HCT116 (cell line): ENCODE measurements at regions of chr5 and their contacts with region 1.

Region 1: GRCh38 chr5:57779383-57780223 is 297.0 kb upstream of the ACTBL2 start:
- DNase-seq: peak; percentile 63
- ATAC-seq: peak; percentile 94
- H3K4me3 ChIP-seq: no peak overlapping the region
- H3K27ac ChIP-seq: no peak overlapping the region
- H3K4me1 ChIP-seq: peaks cover 0 to 8% of the 10 kb centered on the region in 2 experiments; a peak in 1 of 4 replicates
- H3K27me3 ChIP-seq: no peaks in the 10 kb centered on the region
- CTCF ChIP-seq: peak; percentile 60 to 81 (median 78); a peak in 5 of 6 replicates
- POLR2A ChIP-seq: no peak
- RAD21 ChIP-seq: peak; percentile 92

Region 2: GRCh38 chr5:57494104-57495098 is 285.2 kb before region 1 on chr5:
- CTCF ChIA-PET with region 1: interaction called, 36 read pairs
- POLR2A ChIA-PET with region 1: interaction called, 4 read pairs
- RAD21 ChIA-PET with region 1: interaction called, 4 to 9 read pairs
- intact Hi-C with region 1: loop called (anchors 1 kb)
- DNase-seq: peak; percentile 90
- ATAC-seq: peak; percentile 92
- H3K4me3 ChIP-seq: peak overlapping the region; percentile 2 to 47; a peak in 3 of 4 replicates
- H3K27ac ChIP-seq: peak overlapping the region; percentile 75
- H3K4me1 ChIP-seq: peaks cover 40 to 56% of the 10 kb centered on the region in 2 experiments
- H3K27me3 ChIP-seq: no peaks in the 10 kb centered on the region
- CTCF ChIP-seq: no peak
- POLR2A ChIP-seq: no peak
- RAD21 ChIP-seq: peak; percentile 25; the same call in 1 of the 2 replicates

Region 3: GRCh38 chr5:57887851-57888621 is 108.4 kb after region 1 on chr5:
- CTCF ChIA-PET with region 1: interaction called, 18 read pairs
- POLR2A ChIA-PET with region 1: interaction called, 3 read pairs
- RAD21 ChIA-PET with region 1: interaction called, 5 to 6 read pairs
- intact Hi-C with region 1: loop called (anchors 2 kb)
- DNase-seq: peak; percentile 61
- ATAC-seq: peak; percentile 88
- H3K4me3 ChIP-seq: no peak overlapping the region
- H3K27ac ChIP-seq: no peak overlapping the region
- H3K4me1 ChIP-seq: peaks cover 18 to 29% of the 10 kb centered on the region in 2 experiments
- H3K27me3 ChIP-seq: no peaks in the 10 kb centered on the region
- CTCF ChIP-seq: peak; percentile 59 to 75 (median 68); a peak in 5 of 6 replicates
- POLR2A ChIP-seq: no peak
- RAD21 ChIP-seq: peak; percentile 81